ENCODE measurements at regions of chr3 and their contacts with region 1.

Region 1: GRCh38 chr3:38521391-38521987 is 25.3 kb downstream of the EXOG start:
- DNase-seq: peak; percentile 72
- CTCF ChIP-seq: peak; percentile 95

Region 2: GRCh38 chr3:38473229-38473628 is 48.3 kb before region 1 on chr3:
- CTCF ChIA-PET with region 1: no interaction called
- POLR2A ChIA-PET with region 1: no interaction called
- DNase-seq: no peak
- CTCF ChIP-seq: no peak

Region 3: DNA sequence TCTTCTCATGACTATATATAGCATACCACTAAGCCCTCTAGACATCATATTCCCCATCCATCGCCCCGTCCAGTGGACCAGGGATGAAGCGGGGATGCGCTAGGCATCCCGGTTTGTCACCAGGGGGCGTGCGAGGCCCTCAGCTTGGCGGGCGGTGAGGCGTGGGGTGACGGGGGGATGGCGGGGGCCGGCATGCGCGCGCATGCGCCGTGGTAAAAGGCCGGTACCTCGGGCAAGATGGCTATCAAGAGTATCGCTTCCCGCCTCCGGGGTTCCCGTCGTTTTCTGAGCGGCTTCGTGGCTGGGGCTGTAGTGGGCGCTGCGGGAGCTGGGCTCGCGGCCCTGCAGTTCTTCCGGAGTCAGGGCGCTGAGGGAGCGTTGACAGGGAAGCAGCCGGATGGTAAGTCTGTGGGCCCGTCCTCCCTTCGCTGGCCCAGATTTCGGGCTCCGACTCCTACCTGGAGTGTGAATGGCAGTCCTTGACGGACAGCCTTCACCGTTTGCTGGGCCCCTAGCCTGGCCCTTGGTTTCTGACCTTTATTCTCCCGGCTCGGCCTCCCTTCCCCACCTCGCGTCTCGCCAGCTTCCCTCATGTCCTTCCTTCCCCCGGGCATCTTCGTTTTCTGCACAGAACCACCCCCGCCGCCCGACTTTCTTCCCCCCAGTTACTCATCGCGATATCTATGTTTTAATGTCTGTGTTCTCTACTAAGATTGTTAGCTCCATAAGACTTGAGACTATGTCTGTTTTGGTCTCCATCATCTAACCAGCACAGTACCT is 25.2 kb before region 1 on chr3 and contains the start of gene EXOG:
- CTCF ChIA-PET with region 1: interaction called, 29 read pairs
- POLR2A ChIA-PET with region 1: no interaction called
- DNase-seq: peak; percentile 99
- CTCF ChIP-seq: peak; percentile 92

Region 4: GRCh38 chr3:38542401-38543298 is 21.2 kb after region 1 on chr3:
- CTCF ChIA-PET with region 1: interaction called, 24 read pairs
- POLR2A ChIA-PET with region 1: no interaction called
- DNase-seq: no peak
- CTCF ChIP-seq: no peak

Region 5: DNA sequence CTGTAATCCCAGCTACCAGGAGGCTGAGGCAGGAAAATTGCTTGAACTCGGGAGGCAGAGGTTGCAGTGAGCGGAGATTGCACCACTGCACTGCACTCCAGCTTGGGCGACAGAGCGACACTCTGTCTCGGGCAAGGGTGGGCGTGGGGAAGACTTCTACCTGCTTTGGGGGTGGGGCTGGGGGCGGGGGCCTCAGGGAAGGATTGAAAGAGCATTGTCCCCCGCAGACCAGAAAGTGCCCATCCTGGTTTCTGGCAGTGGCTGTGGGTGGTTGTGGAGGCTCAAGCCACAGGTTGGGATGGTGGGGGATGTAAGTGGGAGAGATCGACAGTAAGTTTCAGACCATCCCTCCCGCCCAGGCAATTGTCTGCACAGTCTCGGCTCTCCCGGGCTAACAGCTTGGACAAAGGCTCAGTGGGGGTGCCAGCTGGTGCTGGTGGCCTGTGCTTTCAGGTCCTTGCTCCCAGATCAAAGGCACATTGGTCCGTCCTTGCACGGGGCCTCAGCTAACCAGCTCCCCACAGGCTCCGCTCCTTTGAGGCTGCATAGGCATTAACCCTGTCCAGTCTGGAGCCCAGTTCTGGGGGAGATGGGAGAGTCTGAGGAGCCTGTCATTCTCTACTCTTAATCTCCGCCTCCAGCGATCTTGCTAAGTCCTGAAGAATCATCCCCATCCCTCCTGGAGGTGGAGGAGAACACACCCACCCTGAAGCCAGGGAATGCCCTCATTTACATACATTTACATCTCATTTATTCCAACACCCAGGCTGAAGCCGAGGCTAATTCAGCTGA is 119.4 kb after region 1 on chr3:
- CTCF ChIA-PET with region 1: interaction called, 14 read pairs
- POLR2A ChIA-PET with region 1: no interaction called
- DNase-seq: no peak
- CTCF ChIP-seq: no peak

Region 6: GRCh38 chr3:38689774-38690173 is 168.3 kb after region 1 on chr3:
- CTCF ChIA-PET with region 1: no interaction called
- POLR2A ChIA-PET with region 1: no interaction called
- DNase-seq: no peak
- CTCF ChIP-seq: no peak

Region 7: GRCh38 chr3:39029556-39029955 is 508.1 kb after region 1 on chr3:
- CTCF ChIA-PET with region 1: interaction called, 19 read pairs
- POLR2A ChIA-PET with region 1: no interaction called
- DNase-seq: no peak
- CTCF ChIP-seq: no peak

Measured in GM10248 (cell line).